Naive thymus-derived CD4-positive, alpha-beta T cell (primary cell): ENCODE measurements at regions of chr9 and their contacts with region 1.

Region 1: DNA sequence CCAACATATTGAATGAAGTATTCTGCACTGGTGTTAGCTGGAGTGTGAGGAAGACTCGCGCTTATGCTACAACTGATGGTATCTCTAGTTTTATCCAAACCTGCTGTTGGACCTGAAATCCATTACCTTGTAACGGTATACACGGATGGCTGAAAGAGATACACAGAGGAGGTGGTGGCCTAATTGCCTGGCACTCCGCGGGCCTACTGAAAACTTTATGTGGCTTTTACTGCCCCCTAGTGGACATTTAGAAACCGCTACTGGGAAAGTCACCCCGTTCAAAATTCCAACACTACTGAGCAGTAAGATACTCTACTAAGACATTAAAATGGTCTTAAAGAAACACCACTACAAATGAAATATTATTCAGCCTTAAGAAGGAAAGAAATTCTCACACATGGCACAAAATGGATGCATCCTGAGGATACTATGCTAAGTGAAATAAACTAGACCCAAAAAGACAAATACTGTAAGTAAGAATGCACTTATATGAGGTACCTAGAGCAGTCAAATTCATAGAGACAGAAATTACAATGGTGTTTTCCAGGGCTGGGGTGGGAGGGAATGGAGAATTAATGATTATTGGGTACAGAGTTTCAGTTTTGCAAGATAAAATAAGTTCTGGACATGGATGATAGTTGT is 100.4 kb downstream of the TTLL11 start:
- DNase-seq: peak in 6 of 9 donors; percentile 10 to 65 (median 49)
- ATAC-seq: peak; percentile 62
- H3K4me3 ChIP-seq: no peak overlapping the region
- H3K4me3 Mint-ChIP-seq: no peak overlapping the region
- H3K27ac ChIP-seq: no peak overlapping the region
- H3K27ac Mint-ChIP-seq: no peak overlapping the region
- H3K4me1 ChIP-seq: no peaks in the 10 kb centered on the region
- H3K4me1 Mint-ChIP-seq: no peaks in the 10 kb centered on the region
- H3K27me3 ChIP-seq: no peaks in the 10 kb centered on the region
- H3K27me3 Mint-ChIP-seq: no peaks in the 10 kb centered on the region

Region 2: DNA sequence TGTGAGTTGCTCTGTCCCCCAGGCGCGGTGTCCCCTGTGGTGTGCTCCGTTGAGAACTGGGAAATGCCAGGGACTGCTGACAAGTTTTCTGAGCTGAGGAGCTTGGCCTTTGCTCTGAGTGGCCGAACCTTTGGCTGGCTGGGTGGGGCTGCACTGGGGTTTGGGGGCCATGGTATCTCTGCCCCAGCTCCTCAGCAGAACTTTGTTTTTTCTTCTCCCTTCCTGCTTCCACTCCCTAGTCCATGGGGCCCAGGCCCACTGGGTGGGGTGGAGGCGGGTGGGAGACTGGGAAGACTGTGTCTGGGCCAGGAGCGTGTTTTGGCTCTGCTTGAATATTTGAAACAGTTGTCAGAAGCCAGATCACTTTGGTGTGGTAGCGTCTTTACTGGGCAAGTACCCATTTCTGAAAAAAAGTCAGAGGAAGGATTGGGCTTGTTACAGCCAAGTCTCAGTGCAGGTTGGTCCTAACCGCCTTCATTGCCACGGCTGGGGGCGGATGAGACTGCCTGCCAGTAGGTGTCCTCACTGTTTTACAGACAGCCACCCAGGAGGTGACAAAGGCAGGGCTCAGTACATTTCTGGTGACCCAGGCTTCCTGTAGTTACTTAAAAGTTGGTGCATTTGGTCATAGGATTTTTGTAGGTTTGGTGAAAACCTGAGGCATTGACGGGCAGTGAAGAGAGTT is 248.5 kb before region 1 on chr9:
- CTCF ChIA-PET with region 1: no interaction called
- POLR2A ChIA-PET with region 1: no interaction called
- intact Hi-C with region 1: loop called in 1 of 2 experiments (anchors 1 kb)
- DNase-seq: peak in 7 of 9 donors; percentile 14 to 57 (median 46)
- ATAC-seq: peak; percentile 53
- H3K4me3 ChIP-seq: no peak overlapping the region
- H3K4me3 Mint-ChIP-seq: no peak overlapping the region
- H3K27ac ChIP-seq: no peak overlapping the region
- H3K27ac Mint-ChIP-seq: no peak overlapping the region
- H3K4me1 ChIP-seq: peaks cover 0 to 10% of the 10 kb centered on the region in 2 donors
- H3K4me1 Mint-ChIP-seq: peaks cover 0 to 18% (median 13%) of the 10 kb centered on the region in 7 donors
- H3K27me3 ChIP-seq: no peaks in the 10 kb centered on the region
- H3K27me3 Mint-ChIP-seq: peaks cover 0 to 10% (median 7%) of the 10 kb centered on the region in 5 donors

Region 3: GRCh38 chr9:121944716-121945191 is 47.9 kb before region 1 on chr9:
- CTCF ChIA-PET with region 1: no interaction called
- POLR2A ChIA-PET with region 1: no interaction called
- intact Hi-C with region 1: no loop called
- DNase-seq: no peak
- ATAC-seq: no peak
- H3K4me3 ChIP-seq: no peak overlapping the region
- H3K4me3 Mint-ChIP-seq: no peak overlapping the region
- H3K27ac ChIP-seq: no peak overlapping the region
- H3K27ac Mint-ChIP-seq: no peak overlapping the region
- H3K4me1 ChIP-seq: no peaks in the 10 kb centered on the region
- H3K4me1 Mint-ChIP-seq: no peaks in the 10 kb centered on the region
- H3K27me3 ChIP-seq: no peaks in the 10 kb centered on the region
- H3K27me3 Mint-ChIP-seq: no peaks in the 10 kb centered on the region